PC-9 (cell line): ENCODE measurements at regions of chr2 and their contacts with region 1.

Region 1: DNA sequence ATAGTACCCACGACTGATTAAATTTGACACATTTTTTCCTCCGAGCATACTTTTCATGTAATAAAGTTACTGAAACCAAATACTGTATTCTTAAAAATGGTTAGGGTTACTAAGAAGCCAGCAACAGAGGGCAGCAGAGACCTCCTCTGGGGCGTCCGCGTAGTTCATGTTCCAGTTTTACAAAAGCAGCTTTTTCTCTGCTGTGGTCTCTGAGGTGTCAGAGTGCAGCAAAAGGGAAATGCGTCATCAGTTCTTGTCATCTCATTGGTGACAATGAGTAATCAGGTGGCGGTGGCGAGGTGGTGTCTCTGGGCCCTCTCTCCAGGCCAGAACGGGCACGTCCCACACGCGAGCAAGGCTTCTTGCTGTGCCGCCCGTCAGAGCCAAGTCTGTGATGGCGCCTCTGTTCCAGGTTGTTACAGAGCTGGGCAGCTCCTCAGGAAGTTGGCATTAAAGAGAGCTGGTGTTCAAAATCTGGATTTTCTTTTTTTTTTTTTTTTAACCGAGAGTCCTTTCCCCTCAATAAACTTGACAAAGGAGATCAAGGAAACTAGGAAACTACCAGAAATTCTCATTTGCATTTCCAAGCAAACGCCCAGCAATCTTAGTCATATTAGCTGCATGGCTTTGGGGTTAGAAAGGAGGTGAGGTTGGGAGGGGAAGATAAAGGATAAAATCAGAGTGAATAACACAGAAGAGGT is 98.6 kb upstream of the BZW1 start:
- DNase-seq: peak; percentile 86 to 98
- H3K4me3 ChIP-seq: peak overlapping the region; percentile 43; the same call in 1 of the 2 replicates
- H3K27ac ChIP-seq: peak overlapping the region; percentile 88
- H3K4me1 ChIP-seq: peaks cover 14% of the 10 kb centered on the region
- H3K27me3 ChIP-seq: no peaks in the 10 kb centered on the region
- CTCF ChIP-seq: peak; percentile 94

Region 2: DNA sequence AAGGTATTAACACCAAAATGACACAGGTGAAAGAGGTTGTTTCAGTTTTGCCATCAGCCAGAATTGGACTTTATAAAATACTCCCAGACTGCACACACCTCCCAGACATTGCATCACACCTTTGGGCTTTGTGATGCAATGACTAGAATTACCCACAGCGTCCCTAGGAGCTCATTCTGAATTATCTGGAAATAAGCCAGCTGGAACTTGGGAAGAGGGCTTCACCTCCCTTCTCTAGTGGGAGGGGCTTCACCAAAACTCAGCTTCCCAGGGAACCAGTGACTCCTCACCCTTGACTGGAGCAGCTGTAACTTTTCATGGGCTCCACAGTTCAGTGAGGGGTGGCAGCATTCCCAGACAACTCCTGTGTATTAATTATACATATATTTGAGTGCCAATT is 15.5 kb after region 1 on chr2:
- CTCF ChIA-PET with region 1: no interaction called
- POLR2A ChIA-PET with region 1: no interaction called
- intact Hi-C with region 1: no loop called
- DNase-seq: peak in 1 of 2 experiments; percentile 49
- H3K4me3 ChIP-seq: no peak overlapping the region
- H3K27ac ChIP-seq: peak overlapping the region; percentile 49
- H3K4me1 ChIP-seq: peaks cover 22% of the 10 kb centered on the region
- H3K27me3 ChIP-seq: no peaks in the 10 kb centered on the region
- CTCF ChIP-seq: no peak

Region 3: GRCh38 chr2:200756618-200757321 is 43.6 kb after region 1 on chr2:
- CTCF ChIA-PET with region 1: interaction called, 7 read pairs
- POLR2A ChIA-PET with region 1: interaction called, 3 read pairs
- intact Hi-C with region 1: loop called (anchors 2 kb)
- DNase-seq: peak; percentile 64 to 89
- H3K4me3 ChIP-seq: peak overlapping the region; percentile 2; the same call in 1 of the 2 replicates
- H3K27ac ChIP-seq: peak overlapping the region; percentile 83
- H3K4me1 ChIP-seq: peaks cover 67% of the 10 kb centered on the region
- H3K27me3 ChIP-seq: no peaks in the 10 kb centered on the region
- CTCF ChIP-seq: no peak

Region 4: DNA sequence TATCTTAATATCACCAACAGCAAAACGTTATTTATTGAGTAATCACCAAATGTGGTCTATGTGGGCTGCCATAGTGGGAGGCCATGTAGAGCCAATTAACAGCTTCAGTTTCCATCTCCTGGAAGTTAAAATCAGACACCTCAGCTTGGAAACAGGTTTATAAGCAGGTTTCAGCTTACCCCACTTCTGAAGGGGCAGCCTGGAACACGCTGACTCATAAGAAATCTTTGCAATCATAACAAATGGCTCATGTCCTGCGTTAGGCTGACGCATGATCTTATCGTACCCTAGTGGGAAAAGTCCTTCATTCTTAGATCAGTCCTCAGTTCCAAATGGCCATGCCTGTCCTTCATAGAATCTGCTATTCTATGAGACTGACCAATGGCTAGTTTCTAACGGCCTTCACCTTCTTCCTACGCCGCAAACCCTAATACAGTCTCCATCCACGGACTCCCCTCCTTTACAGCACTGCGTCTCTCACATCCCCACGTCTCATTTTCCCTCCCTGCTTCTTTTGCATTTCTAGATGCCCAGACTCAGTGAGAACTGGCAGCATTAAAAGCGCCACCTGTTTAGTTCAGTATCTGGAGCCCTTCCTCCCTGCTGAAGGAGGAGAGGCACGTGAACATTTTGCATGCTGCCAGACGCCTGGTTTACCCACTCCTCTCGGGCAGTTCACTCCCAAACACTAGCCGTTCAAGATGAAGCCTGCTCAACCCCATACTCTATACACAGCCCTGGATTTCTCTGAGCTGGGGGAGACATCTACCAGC is 74.4 kb after region 1 on chr2:
- CTCF ChIA-PET with region 1: no interaction called
- POLR2A ChIA-PET with region 1: interaction called, 3 read pairs
- intact Hi-C with region 1: loop called (anchors 1 kb)
- DNase-seq: peak; percentile 68 to 96
- H3K4me3 ChIP-seq: peak overlapping the region; percentile 47; the same call in 1 of the 2 replicates
- H3K27ac ChIP-seq: peak overlapping the region; percentile 99
- H3K4me1 ChIP-seq: peaks cover 72% of the 10 kb centered on the region
- H3K27me3 ChIP-seq: no peaks in the 10 kb centered on the region
- CTCF ChIP-seq: no peak

Region 5: GRCh38 chr2:200864176-200864976 is 151.2 kb after region 1 on chr2 and contains the start of gene CLK1:
- CTCF ChIA-PET with region 1: no interaction called
- POLR2A ChIA-PET with region 1: interaction called, 8 read pairs
- intact Hi-C with region 1: loop called (anchors 1 kb)
- DNase-seq: peak; percentile 79 to 83
- H3K4me3 ChIP-seq: peak within 1 kb of the TSS; percentile 87
- H3K27ac ChIP-seq: peak within 1 kb of the TSS; percentile 84
- H3K4me1 ChIP-seq: peaks cover 17% of the 10 kb centered on the region
- H3K27me3 ChIP-seq: no peaks in the 10 kb centered on the region
- CTCF ChIP-seq: no peak
- total RNA-seq, gene CLK1: 38.5 and 57.0 TPM in 2 replicates

Region 6: DNA sequence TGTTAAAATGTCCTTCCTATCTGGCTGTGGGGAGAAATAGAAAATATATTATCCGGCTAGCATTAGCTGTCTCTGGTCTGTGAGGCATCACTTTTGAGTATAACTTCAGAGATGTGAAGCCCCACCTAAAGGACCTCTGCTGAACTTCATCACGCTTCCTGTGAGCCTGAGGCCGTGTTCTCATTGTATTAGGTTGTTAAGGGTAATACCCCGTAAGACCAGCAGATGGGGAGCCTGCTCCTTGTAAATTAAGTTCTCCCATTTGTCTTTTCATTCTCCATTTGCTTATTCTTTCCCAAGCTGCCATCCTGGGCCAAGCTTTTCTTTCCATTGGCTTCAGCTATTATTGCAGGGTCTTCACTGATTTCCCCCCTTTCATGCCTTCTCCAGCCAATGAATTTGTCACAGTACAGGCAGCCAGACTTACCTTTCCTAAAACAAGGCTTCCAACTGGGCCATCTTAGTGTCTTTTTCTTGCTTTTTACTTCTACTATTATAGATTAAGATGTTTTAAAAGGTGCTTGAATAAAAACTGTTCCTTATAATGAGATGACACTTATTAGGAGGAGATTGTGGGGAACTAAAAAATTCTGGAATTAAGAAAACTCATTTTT is 188.4 kb after region 1 on chr2:
- CTCF ChIA-PET with region 1: no interaction called
- POLR2A ChIA-PET with region 1: no interaction called
- intact Hi-C with region 1: loop called (anchors 1 kb)
- DNase-seq: peak; percentile 68 to 75
- H3K4me3 ChIP-seq: no peak overlapping the region
- H3K27ac ChIP-seq: no peak overlapping the region
- H3K4me1 ChIP-seq: no peaks in the 10 kb centered on the region
- H3K27me3 ChIP-seq: no peaks in the 10 kb centered on the region
- CTCF ChIP-seq: peak; percentile 81